Activated naive CD4-positive, alpha-beta T cell treated with anti-CD3 and anti-CD28 coated beads for 36 hours (primary cell): ENCODE measurements at regions of chr1 and their contacts with region 1.

Region 1: DNA sequence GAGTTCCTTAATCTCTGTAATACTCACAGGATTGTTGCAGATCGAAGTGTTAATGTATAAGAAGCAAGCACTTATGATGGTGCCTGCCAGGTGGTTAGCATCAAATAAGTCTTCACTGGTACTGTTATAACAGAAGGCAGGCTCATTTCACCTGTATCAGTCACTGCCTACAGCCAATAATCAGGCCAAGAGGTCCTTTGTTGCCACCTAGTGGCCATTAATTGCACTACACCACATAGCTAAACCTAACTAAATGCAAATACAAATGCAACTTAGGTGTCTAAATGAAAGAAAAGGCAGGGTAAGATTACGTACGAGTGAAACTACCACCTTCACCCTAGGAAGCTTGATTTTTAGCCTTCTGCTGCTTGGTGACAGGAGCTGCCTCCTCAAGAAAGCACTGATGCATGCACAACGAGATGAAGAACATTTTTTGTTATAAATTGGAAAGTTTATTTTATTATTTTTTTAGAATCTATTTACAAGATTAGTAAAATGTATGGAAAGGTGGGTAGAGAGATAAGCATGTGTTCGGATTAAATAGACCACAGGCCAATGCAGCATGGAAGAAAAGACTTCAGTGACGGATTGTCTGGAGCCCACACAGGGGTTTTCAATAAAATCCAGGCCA is 334.8 kb upstream of the CAMK1G start:
- DNase-seq: peak; percentile 74
- H3K4me3 Mint-ChIP-seq: no peak overlapping the region
- H3K27ac Mint-ChIP-seq: no peak overlapping the region
- H3K4me1 Mint-ChIP-seq: no peaks in the 10 kb centered on the region
- H3K27me3 Mint-ChIP-seq: peaks cover 1% of the 10 kb centered on the region

Region 2: GRCh38 chr1:208652296-208653160 is 596.2 kb before region 1 on chr1:
- CTCF ChIA-PET with region 1: interaction called, 16 read pairs
- intact Hi-C with region 1: loop called (anchors 2 kb)
- DNase-seq: peak; percentile 41
- H3K4me3 Mint-ChIP-seq: no peak overlapping the region
- H3K27ac Mint-ChIP-seq: no peak overlapping the region
- H3K4me1 Mint-ChIP-seq: no peaks in the 10 kb centered on the region
- H3K27me3 Mint-ChIP-seq: peaks cover 14% of the 10 kb centered on the region

Region 3: GRCh38 chr1:209207701-209208286 is 41.0 kb before region 1 on chr1:
- CTCF ChIA-PET with region 1: interaction called, 31 read pairs
- intact Hi-C with region 1: loop called (anchors 1 kb)
- DNase-seq: peak; percentile 45
- H3K4me3 Mint-ChIP-seq: no peak overlapping the region
- H3K27ac Mint-ChIP-seq: no peak overlapping the region
- H3K4me1 Mint-ChIP-seq: peaks cover 2% of the 10 kb centered on the region
- H3K27me3 Mint-ChIP-seq: peaks cover 32% of the 10 kb centered on the region

Region 4: DNA sequence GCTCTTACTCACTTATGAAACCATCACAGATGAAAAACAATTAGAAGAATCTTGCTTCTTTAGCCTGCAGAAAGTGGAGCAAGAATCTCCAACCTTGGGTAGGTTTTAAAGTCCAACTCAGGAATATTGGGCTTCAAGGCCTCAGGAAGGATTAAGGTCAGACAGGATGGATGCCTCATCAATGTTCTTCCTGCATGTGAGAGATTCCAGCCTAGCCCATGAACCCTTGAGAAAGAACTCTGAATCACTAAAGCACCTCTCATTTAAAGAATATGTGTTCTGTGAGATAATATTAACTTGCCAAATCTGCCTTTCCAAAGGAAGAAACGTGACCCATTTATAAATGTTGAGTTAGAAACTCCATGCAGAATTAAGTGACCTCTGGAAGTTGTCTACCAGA is 10.4 kb before region 1 on chr1:
- CTCF ChIA-PET with region 1: interaction called, 11 read pairs
- intact Hi-C with region 1: no loop called
- DNase-seq: no peak
- H3K4me3 Mint-ChIP-seq: no peak overlapping the region
- H3K27ac Mint-ChIP-seq: no peak overlapping the region
- H3K4me1 Mint-ChIP-seq: no peaks in the 10 kb centered on the region
- H3K27me3 Mint-ChIP-seq: peaks cover 6% of the 10 kb centered on the region

Region 5: GRCh38 chr1:209260136-209260535 is 11.4 kb after region 1 on chr1:
- CTCF ChIA-PET with region 1: interaction called, 11 read pairs
- intact Hi-C with region 1: no loop called
- DNase-seq: no peak
- H3K4me3 Mint-ChIP-seq: no peak overlapping the region
- H3K27ac Mint-ChIP-seq: no peak overlapping the region
- H3K4me1 Mint-ChIP-seq: no peaks in the 10 kb centered on the region
- H3K27me3 Mint-ChIP-seq: peaks cover 4% of the 10 kb centered on the region

Region 6: DNA sequence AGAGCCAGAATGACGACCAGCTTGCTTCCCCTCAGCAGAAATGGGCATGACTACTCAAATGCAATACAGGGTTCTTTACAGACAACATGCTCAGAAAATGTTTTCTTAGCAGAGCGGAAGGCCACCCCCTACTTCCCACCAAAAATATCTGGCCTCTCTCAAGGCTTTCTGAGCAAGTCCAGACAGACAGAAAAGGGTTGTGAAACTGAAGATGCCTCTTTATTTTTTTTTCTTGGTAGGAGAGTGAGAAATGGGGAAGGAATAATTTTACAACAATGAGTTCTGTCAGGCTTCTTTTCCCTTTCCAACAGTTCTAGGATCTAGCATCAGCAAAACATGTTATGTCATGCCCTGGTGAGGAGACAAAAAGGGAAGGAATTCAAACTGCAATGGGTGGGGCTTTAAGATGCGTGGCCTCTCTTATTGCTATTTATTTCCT is 162.7 kb after region 1 on chr1:
- CTCF ChIA-PET with region 1: no interaction called
- intact Hi-C with region 1: no loop called
- DNase-seq: no peak
- H3K4me3 Mint-ChIP-seq: no peak overlapping the region
- H3K27ac Mint-ChIP-seq: no peak overlapping the region
- H3K4me1 Mint-ChIP-seq: no peaks in the 10 kb centered on the region
- H3K27me3 Mint-ChIP-seq: peaks cover 31% of the 10 kb centered on the region